Mammary epithelial cell (primary cell): ENCODE measurements at regions of chr3 and their contacts with region 1.

Region 1: DNA sequence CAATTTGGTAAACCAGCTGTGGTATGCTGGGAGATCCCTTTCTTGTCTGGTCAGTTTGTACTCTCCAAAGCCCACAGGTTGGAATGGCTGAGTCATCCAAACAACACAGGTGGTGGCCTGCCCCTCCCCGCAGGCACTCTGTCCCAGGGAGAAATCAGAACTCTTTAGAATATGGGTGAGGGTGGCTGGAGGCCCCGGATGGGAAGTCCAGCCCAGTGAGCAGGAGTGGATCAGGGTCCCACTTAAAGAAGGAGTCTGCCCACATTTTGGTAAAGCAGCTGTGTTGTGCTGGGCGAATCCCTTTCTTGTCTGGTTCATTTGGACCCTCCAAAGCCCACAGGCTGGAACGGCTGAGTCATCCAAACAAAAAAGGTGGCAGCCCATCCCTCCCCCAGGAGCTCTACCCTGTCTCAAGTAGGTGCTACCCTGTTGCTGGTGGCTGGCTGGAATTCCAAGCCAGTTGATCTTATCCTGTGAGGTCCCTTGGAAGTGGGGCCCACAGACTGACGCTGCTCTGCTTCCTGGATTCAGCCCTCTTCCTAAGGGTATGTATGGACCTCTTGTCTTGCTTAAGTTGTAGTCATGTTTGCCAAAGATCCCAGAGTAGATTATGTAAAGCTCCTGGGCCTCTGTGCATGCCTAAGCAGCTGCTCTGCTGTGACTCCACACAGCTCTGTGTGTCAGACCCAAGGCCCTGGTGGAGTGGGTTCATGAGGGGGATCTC is 44.6 kb downstream of the CCR1 start:
- DNase-seq: peak; percentile 91
- H3K4me3 ChIP-seq: peak overlapping the region in 2 of 3 experiments; percentile 10 to 25
- H3K27ac ChIP-seq: peak overlapping the region; percentile 82
- H3K4me1 ChIP-seq: peaks cover 22% of the 10 kb centered on the region
- H3K27me3 ChIP-seq: no peaks in the 10 kb centered on the region
- CTCF ChIP-seq: no peak

Region 2: GRCh38 chr3:45795882-45796765 is 367.4 kb before region 1 on chr3 and contains the start of gene SLC6A20:
- CTCF ChIA-PET with region 1: no interaction called
- dilution Hi-C with region 1: no loop called
- in situ Hi-C with region 1: no loop called
- intact Hi-C with region 1: no loop called
- DNase-seq: no peak
- H3K4me3 ChIP-seq: peak within 1 kb of the TSS; percentile 18 to 59 (median 54)
- H3K27ac ChIP-seq: no peak within 1 kb of the TSS
- H3K4me1 ChIP-seq: peaks cover 5% of the 10 kb centered on the region
- H3K27me3 ChIP-seq: peaks cover 16% of the 10 kb centered on the region
- CTCF ChIP-seq: no peak
- total RNA-seq, gene SLC6A20: 1.7 TPM in 1 of 2 donors, not detected in the other

Region 3: GRCh38 chr3:46089237-46090011 is 74.1 kb before region 1 on chr3:
- CTCF ChIA-PET with region 1: no interaction called
- dilution Hi-C with region 1: no loop called
- in situ Hi-C with region 1: no loop called
- intact Hi-C with region 1: loop called (anchors 1 kb)
- DNase-seq: peak; percentile 97
- H3K4me3 ChIP-seq: no peak overlapping the region
- H3K27ac ChIP-seq: peak overlapping the region; percentile 70
- H3K4me1 ChIP-seq: peaks cover 27% of the 10 kb centered on the region
- H3K27me3 ChIP-seq: no peaks in the 10 kb centered on the region
- CTCF ChIP-seq: no peak

Region 4: DNA sequence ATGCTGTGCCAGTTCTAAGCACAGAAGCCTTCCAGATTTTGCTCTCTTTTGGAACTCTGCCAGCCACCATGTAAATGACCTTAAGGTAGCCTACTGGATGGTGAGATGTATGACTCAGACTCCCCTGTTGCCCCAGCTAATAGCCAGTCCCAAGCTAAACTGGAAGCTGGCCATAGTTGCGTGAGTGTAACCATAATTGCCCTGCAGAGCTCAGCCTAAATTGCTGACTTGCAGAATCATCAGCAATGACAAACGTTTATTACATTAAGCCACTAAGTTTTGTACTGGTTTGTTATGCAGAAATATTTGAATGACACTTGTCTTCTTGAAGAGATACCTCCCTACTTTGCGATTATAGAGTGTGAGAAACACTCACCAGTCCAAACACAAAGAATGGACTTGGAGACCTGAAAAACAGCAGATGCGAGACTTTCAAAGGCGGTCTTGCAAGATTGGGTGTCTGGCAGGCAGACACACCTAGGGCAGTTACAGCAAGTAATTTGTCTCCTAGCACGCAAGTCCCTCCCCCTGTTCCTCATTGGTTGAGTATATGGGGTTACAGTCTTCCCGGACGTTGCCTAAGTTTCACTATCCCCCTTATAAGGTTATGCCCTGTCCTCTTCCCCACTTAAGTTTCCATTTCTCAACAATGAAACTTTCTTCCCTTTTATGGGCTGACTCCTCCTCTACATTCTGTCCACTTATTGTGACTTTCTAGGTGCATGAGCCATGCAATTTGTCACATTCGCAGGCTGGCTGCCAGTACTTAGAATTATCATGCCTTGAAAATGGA is 52.6 kb before region 1 on chr3:
- CTCF ChIA-PET with region 1: no interaction called
- dilution Hi-C with region 1: no loop called
- in situ Hi-C with region 1: no loop called
- intact Hi-C with region 1: loop called (anchors 2 kb)
- DNase-seq: peak; percentile 86
- H3K4me3 ChIP-seq: no peak overlapping the region
- H3K27ac ChIP-seq: no peak overlapping the region
- H3K4me1 ChIP-seq: peaks cover 60% of the 10 kb centered on the region
- H3K27me3 ChIP-seq: no peaks in the 10 kb centered on the region
- CTCF ChIP-seq: no peak

Region 5: DNA sequence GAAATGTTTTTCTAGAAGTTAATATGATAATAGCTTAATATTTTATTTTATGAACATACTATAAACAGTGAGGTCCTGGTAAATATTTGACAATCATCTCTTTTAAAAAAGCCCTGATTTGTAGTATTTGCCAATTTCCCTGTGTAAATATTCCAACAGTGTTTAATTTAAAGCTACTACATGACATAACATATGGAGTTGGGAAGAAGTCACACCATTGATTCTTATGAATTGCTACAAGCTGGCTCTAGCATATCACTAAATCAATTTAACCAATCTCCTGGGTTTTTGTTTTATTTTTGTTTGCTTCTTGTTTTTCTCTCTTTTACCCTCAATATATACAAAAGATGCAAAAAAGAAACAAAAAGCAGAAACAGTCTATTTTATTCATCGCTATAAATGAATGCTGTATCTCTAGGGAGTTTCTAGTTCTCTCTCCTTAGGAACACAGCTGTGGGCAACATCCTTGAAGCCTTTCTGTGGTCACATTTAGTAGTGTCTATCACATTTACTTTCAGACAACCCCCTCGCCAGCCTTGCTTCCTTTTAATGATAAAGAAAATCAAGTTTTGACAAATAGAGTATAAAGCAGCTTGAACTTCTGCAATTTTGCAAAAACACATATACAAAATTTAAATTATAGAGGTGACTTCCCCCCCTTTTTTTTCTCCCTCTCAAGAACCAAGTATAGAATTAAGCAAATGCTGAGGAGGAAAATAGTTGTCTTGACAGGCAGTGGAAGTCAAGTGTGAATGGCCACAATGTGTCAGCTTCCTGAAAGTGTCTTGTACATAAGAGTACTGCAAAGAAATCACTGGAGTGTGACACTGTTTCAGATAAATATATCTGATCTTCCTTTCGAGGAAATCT is 23.2 kb after region 1 on chr3:
- CTCF ChIA-PET with region 1: no interaction called
- dilution Hi-C with region 1: no loop called
- in situ Hi-C with region 1: no loop called
- intact Hi-C with region 1: loop called (anchors 1 kb)
- DNase-seq: no peak
- H3K4me3 ChIP-seq: no peak overlapping the region
- H3K27ac ChIP-seq: no peak overlapping the region
- H3K4me1 ChIP-seq: peaks cover 18% of the 10 kb centered on the region
- H3K27me3 ChIP-seq: no peaks in the 10 kb centered on the region
- CTCF ChIP-seq: no peak